ENCODE measurements at regions of chr4 and their contacts with region 1.

Region 1: DNA sequence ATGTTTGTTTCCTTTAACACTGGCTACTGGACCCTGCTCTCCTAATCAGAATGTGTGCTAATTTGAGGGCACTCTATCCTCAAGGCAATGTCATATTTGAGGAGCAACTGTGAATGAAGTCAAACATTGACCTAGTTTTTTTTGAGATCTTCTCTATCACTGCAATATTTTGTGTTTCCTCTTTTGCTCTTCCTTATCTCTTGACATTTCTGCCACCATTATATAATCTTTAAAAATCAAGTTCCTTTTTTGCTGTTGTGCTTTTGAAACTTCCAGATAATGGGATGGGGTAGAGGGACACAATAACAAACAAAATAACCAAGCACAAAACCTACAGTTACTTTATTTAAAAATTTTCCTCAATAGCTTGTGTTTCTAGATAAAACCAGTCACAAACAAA is 7.4 kb upstream of the WDFY3 start:
- DNase-seq: no peak
- ATAC-seq: no peak

Region 2: GRCh38 chr4:84750253-84750959 is 223.4 kb before region 1 on chr4:
- intact Hi-C with region 1: loop called in 1 of 2 experiments (anchors 2 kb)
- DNase-seq: no peak
- ATAC-seq: peak; percentile 68

Region 3: GRCh38 chr4:85243857-85244256 is 270.0 kb after region 1 on chr4:
- intact Hi-C with region 1: no loop called
- DNase-seq: no peak
- ATAC-seq: no peak

Measured in left colon (tissue), 2 donors.